Heart left ventricle (tissue), 16 donors: ENCODE measurements at regions of chr17 and their contacts with region 1.

Region 1: DNA sequence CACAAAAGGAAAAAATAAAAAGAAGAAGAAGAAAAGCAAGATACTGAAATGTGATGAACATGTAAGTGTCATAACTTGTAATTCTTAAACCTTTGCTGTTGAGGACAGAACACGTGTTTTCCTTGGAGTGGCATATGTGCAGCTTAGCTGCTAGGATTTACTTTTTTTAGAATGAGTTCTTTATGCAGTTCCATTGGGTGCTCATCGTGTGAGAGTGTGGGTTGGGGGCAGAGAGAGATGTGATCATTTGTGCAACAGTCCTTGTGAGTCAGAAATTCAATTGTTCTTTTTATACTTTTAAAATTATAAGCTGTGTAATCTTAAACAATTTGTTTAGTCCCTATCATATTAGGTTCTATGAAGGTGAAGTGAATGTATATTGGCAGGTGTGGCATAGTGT is 5.5 kb upstream of the DHRS11 start:
- DNase-seq: no peak
- ATAC-seq: no peak
- H3K4me3 ChIP-seq: no peak overlapping the region
- H3K27ac ChIP-seq: no peak overlapping the region
- H3K4me1 ChIP-seq: peaks cover 0 to 6% (median 2%) of the 10 kb centered on the region in 12 donors
- H3K27me3 ChIP-seq: no peaks in the 10 kb centered on the region
- CTCF ChIP-seq: no peak
- POLR2A ChIP-seq: no peak

Region 2: GRCh38 chr17:36545465-36546417 is 40.4 kb before region 1 on chr17:
- intact Hi-C with region 1: loop called in 7 of 10 experiments (anchors 2 to 5 kb)
- DNase-seq: peak; percentile 96 to 97 (median 97)
- ATAC-seq: peak; percentile 90 to 95 (median 93)
- H3K4me3 ChIP-seq: peak overlapping the region; percentile 63 to 99 (median 84)
- H3K27ac ChIP-seq: peak overlapping the region; percentile 93 to 100 (median 99)
- H3K4me1 ChIP-seq: peaks cover 12 to 58% (median 43%) of the 10 kb centered on the region in 12 donors
- H3K27me3 ChIP-seq: no peaks in the 10 kb centered on the region
- CTCF ChIP-seq: no peak
- POLR2A ChIP-seq: peak in 1 of 2 donors; percentile 48

Region 3: DNA sequence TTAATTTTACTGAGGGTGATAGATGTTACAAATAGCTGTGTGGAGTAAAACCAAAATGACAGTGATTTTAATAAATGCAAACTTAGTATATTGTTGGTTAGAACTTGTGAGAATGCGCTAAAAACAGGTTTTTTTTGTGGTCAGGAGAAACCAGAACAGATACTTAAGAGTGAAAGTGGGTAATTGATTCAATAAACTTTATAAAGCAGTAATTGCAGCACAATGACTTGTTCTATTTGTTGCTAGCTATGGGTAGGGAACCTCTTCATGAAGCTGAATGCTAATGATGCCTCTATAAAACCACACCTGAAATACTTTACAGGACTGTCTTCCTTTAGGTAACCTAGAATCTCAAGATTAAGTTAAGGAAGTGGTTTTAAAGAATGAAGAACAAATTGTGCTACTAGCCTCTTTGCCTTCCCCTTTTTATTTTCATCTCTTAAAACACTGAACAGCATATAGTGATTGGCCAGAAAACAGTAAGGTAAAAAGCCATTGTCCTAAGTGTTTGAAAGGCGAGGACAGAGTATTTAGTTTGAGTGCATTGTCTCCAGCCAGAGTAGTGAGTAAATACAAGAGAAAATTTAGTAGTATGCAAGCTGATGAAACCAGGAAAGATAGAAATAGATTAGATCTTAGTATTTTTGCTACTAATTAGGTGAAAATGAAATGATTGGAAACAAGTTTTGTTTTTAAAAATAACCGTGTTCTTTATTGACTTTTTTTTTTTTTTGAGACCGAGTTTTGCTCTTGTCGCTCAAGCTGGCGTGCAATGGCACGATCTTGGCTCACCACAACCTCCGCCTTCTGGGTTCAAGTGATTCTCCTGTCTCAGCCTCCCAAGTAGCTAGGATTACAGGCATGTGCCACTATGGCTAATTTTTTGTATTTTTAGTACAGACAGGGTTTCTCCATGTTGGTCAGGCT is 35.4 kb before region 1 on chr17:
- intact Hi-C with region 1: loop called in 7 of 10 experiments (anchors 2 to 5 kb)
- DNase-seq: no peak
- ATAC-seq: no peak
- H3K4me3 ChIP-seq: no peak overlapping the region
- H3K27ac ChIP-seq: peak overlapping the region in 1 of 12 donors; percentile 5
- H3K4me1 ChIP-seq: peaks cover 12 to 84% (median 56%) of the 10 kb centered on the region in 12 donors
- H3K27me3 ChIP-seq: no peaks in the 10 kb centered on the region
- CTCF ChIP-seq: no peak
- POLR2A ChIP-seq: no peak